IMR-90 (cell line): ENCODE measurements at regions of chr6 and their contacts with region 1.

Region 1: DNA sequence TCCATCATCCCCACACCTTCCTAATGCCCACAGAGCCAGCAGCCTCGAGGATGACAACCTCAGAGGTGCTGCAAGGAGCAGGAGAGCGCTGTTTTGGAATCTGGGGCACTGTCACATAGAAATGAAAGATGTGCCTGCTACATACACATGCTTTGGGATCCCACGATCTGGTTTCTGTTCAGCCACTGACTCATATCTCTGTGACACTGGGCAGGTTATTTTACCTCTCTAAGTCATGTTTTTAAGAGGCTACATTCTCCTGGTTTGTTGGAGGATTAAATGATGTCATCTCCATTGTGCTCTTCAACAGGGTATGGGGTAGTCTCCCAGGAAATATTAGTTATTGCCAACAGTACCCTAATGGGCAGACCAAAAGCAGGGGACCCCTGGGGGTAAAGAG is 32.6 kb upstream of the TAB2 start:
- DNase-seq: no peak
- ATAC-seq: no peak
- H3K4me3 ChIP-seq: no peak overlapping the region
- H3K27ac ChIP-seq: no peak overlapping the region
- H3K4me1 ChIP-seq: no peaks in the 10 kb centered on the region
- H3K27me3 ChIP-seq: peaks cover 14% of the 10 kb centered on the region
- CTCF ChIP-seq: no peak
- POLR2A ChIP-seq: no peak
- RAD21 ChIP-seq: no peak

Region 2: GRCh38 chr6:148869585-148869984 is 415.3 kb before region 1 on chr6:
- CTCF ChIA-PET with region 1: no interaction called
- POLR2A ChIA-PET with region 1: no interaction called
- dilution Hi-C with region 1: no loop called
- in situ Hi-C with region 1: no loop called
- intact Hi-C with region 1: no loop called
- DNase-seq: peak; percentile 98
- ATAC-seq: peak; percentile 71
- H3K4me3 ChIP-seq: no peak overlapping the region
- H3K27ac ChIP-seq: no peak overlapping the region
- H3K4me1 ChIP-seq: peaks cover 14% of the 10 kb centered on the region
- H3K27me3 ChIP-seq: no peaks in the 10 kb centered on the region
- CTCF ChIP-seq: no peak
- POLR2A ChIP-seq: no peak
- RAD21 ChIP-seq: no peak

Region 3: GRCh38 chr6:149263321-149263720 is 21.6 kb before region 1 on chr6:
- CTCF ChIA-PET with region 1: interaction called, 10 read pairs
- POLR2A ChIA-PET with region 1: no interaction called
- dilution Hi-C with region 1: no loop called
- in situ Hi-C with region 1: no loop called
- intact Hi-C with region 1: no loop called
- DNase-seq: no peak
- ATAC-seq: no peak
- H3K4me3 ChIP-seq: no peak overlapping the region
- H3K27ac ChIP-seq: no peak overlapping the region
- H3K4me1 ChIP-seq: no peaks in the 10 kb centered on the region
- H3K27me3 ChIP-seq: peaks cover 44% of the 10 kb centered on the region
- CTCF ChIP-seq: no peak
- POLR2A ChIP-seq: no peak
- RAD21 ChIP-seq: no peak